ENCODE measurements at regions of chr6 and their contacts with region 1.

Region 1: GRCh38 chr6:1311400-1312202 is at the start of gene FOXQ1:
- DNase-seq: peak; percentile 95
- ATAC-seq: peak; percentile 79
- H3K4me3 ChIP-seq: peak within 1 kb of the TSS; percentile 98 to 99 (median 98)
- H3K27ac ChIP-seq: peak within 1 kb of the TSS; percentile 97
- H3K4me1 ChIP-seq: peaks cover 46% of the 10 kb centered on the region
- H3K27me3 ChIP-seq: no peaks in the 10 kb centered on the region; a peak in 1 of 5 replicates
- CTCF ChIP-seq: peak; percentile 50
- EP300 ChIP-seq: peak; percentile 56; a peak in 3 of 4 replicates
- POLR2A ChIP-seq: peak in 1 of 2 experiments; percentile 99; a peak in 2 of 4 replicates
- RAD21 ChIP-seq: peak; percentile 84
- total RNA-seq, gene FOXQ1: 39.2 and 39.8 TPM in 2 replicates

Region 2: DNA sequence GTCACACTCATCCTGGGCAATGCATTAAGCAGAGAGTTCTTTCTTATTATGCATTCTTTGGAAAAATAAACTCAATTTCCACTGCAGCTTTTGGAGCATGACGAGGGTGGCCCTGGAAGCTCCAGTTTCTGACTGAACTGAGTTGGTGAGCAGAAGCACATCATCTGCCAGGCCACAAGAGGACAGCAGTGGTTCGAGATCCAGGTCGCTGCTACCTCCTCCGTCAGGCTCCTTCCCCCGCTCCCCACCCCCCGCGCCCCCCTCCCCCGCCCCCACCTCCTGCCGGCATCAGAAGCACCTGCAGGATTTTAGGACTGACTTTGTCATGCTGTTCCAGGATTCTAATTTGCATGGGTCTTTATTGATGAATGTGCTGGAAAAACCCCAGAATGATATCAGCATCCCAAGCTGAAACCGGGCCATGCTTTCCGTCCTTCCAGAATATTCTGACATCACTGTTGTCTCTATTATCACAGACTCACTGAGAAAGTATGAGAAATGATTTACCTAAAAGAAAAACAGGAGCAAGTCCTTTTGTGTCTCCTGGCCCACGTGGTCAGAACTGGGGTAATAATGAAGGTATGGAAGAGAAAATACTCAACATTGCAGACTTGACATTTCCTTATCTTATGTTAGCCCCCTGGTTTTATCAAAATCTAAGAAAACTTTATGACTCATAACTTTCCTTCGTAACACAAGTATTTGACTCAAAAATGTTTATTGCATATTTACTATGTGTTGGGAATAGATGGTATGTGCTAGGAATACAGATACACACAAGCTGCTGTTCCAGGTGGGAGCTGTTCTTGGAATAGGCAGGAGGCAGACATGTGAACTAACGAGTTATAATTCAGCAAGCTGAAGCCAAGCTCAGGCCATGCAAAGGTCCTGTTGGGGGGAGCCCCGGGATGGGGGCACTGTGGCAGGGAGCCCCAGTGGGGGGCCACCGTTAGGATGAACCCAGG is 398.4 kb before region 1 on chr6:
- CTCF ChIA-PET with region 1: no interaction called
- POLR2A ChIA-PET with region 1: interaction called, 32 read pairs
- in situ Hi-C with region 1: no loop called
- intact Hi-C with region 1: no loop called
- DNase-seq: peak; percentile 56
- ATAC-seq: peak; percentile 91
- H3K4me3 ChIP-seq: no peak overlapping the region
- H3K27ac ChIP-seq: no peak overlapping the region
- H3K4me1 ChIP-seq: peaks cover 16% of the 10 kb centered on the region
- H3K27me3 ChIP-seq: peaks cover 2 to 15% of the 10 kb centered on the region in 2 experiments; a peak in 1 of 5 replicates
- CTCF ChIP-seq: peak; percentile 84
- EP300 ChIP-seq: no peak
- POLR2A ChIP-seq: no peak
- RAD21 ChIP-seq: peak; percentile 85

Region 3: GRCh38 chr6:1117530-1118286 is 193.9 kb before region 1 on chr6:
- CTCF ChIA-PET with region 1: no interaction called
- POLR2A ChIA-PET with region 1: interaction called, 11 read pairs
- in situ Hi-C with region 1: no loop called
- intact Hi-C with region 1: no loop called
- DNase-seq: peak; percentile 70
- ATAC-seq: peak; percentile 69
- H3K4me3 ChIP-seq: peak overlapping the region in 1 of 3 experiments; percentile 17; a peak in 1 of 6 replicates
- H3K27ac ChIP-seq: peak overlapping the region; percentile 4
- H3K4me1 ChIP-seq: peaks cover 40% of the 10 kb centered on the region
- H3K27me3 ChIP-seq: no peaks in the 10 kb centered on the region
- CTCF ChIP-seq: no peak
- EP300 ChIP-seq: 0 out of 4 replicates have a peak, but pooled peaks of 1 of the 2 experiments have one; percentile 34
- POLR2A ChIP-seq: no peak
- RAD21 ChIP-seq: no peak

Region 4: DNA sequence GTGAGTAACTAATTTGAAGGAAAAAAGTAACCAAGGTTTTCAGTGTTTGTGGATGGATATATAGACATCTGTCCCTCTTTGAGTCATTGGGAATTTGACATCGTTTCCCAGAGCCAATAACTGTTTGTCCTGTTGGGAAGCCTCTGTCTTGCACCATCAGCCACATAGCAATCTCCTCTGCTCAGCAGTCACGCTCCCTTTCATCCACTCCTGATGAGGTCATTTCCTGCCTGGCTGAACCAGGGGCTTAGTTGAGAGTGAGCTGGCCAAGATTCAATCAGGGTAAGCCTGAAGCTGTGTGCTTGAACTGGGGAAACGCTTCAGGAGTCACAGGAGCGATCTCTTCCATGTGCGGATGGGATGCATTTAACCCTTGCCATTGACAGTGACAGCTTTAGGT is 121.2 kb before region 1 on chr6:
- CTCF ChIA-PET with region 1: no interaction called
- POLR2A ChIA-PET with region 1: interaction called, 19 read pairs
- in situ Hi-C with region 1: no loop called
- intact Hi-C with region 1: no loop called
- DNase-seq: peak; percentile 79
- ATAC-seq: peak; percentile 28; the same call in 2 of the 3 replicates
- H3K4me3 ChIP-seq: no peak overlapping the region
- H3K27ac ChIP-seq: no peak overlapping the region
- H3K4me1 ChIP-seq: peaks cover 27% of the 10 kb centered on the region
- H3K27me3 ChIP-seq: no peaks in the 10 kb centered on the region
- CTCF ChIP-seq: no peak
- EP300 ChIP-seq: no peak
- POLR2A ChIP-seq: no peak
- RAD21 ChIP-seq: no peak

Region 5: DNA sequence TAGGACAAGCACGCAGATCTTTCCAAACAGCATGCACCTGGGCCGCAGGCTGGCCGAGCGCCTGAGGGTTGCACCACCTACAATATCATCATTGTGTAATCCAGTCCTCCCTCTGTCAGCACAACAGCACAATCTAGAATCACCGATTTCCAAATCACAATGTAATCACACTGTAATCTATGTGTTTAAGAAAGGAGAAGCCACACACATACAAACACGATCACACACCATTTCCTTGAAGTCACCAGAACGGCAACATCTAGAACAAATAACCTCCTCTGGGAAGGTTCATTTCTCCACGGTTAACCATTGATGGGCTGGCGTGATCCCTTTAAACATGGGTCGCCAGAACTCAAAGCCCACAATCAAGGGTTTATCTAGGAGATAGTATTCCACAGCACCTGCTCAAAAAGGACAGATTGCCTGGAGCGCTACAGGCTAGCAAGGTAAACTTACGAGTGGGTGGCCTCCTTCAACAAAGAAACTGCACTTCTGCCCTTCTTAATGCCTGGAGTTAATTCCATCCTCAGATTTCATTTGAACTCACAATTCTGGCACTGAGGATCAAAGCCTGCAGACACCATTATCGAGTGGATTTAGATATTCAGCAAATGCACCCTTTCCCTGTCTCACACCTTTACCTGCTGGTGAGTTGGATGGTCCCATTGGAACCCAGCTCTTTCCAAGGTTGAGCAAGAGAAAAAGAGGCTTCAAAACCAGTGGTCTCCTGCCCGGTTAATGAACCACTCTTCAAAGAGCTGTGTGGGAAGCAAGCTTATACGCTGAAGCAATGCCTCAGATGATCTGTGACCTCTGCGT is 83.5 kb before region 1 on chr6:
- CTCF ChIA-PET with region 1: interaction called, 3 read pairs
- POLR2A ChIA-PET with region 1: interaction called, 354 read pairs
- in situ Hi-C with region 1: no loop called
- intact Hi-C with region 1: loop called (anchors 1 kb)
- DNase-seq: peak; percentile 99
- ATAC-seq: peak; percentile 89
- H3K4me3 ChIP-seq: peak overlapping the region; percentile 54 to 68 (median 59)
- H3K27ac ChIP-seq: peak overlapping the region; percentile 96
- H3K4me1 ChIP-seq: peaks cover 97% of the 10 kb centered on the region
- H3K27me3 ChIP-seq: no peaks in the 10 kb centered on the region; a peak in 1 of 5 replicates
- CTCF ChIP-seq: 0 out of 2 replicates have a peak, but pooled peaks have one; percentile 3
- EP300 ChIP-seq: peak; percentile 85 to 98
- POLR2A ChIP-seq: peak; percentile 51 to 66; a peak in 3 of 4 replicates
- RAD21 ChIP-seq: peak; percentile 48

Region 6: GRCh38 chr6:1290086-1290485 is 21.5 kb before region 1 on chr6:
- CTCF ChIA-PET with region 1: no interaction called
- POLR2A ChIA-PET with region 1: interaction called, 66 read pairs
- in situ Hi-C with region 1: no loop called
- intact Hi-C with region 1: no loop called
- DNase-seq: no peak
- ATAC-seq: no peak
- H3K4me3 ChIP-seq: no peak overlapping the region
- H3K27ac ChIP-seq: no peak overlapping the region
- H3K4me1 ChIP-seq: peaks cover 24% of the 10 kb centered on the region
- H3K27me3 ChIP-seq: no peaks in the 10 kb centered on the region
- CTCF ChIP-seq: no peak
- EP300 ChIP-seq: no peak
- POLR2A ChIP-seq: no peak
- RAD21 ChIP-seq: no peak

Region 7: DNA sequence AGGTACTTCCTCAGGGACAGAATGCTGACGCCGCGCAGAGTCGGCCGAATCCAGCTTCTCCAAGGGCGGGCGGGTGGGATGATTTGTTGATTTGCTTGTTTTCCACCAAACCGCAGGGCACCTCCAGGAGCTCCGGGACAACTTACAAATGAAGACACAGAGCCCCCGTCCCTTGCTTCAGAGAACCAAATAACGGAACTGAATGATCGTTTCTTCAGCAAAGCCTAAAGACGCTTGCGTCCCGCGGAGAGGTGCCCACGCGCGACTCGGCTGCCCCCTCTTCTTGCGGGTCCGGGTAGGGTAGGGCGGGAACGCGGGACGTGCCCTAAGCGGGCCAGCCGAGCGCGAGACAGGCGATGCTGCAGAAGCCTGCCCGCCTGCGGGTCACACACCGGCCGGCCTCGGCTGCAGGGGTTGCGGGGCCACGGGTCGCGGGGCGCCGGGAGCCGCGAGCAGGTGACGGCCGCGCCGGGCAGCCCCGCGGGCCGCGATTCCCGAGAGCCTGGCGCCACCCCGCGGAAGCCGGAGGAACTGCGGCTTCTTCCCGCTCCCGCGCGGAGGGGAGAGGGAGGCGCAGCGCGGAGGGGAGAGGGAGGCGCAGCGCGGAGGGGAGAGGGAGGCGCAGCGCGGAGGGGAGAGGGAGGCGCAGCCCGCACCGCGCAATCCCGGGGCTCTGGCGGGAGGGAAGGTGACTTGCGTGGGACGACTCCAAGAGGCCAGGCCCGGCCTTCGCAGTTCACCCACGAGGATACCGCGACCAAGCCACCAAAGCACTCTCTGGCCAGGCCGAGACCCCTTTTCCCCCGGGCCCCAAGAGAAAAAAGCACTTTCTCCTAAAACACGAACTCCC is 70.1 kb after region 1 on chr6:
- CTCF ChIA-PET with region 1: no interaction called
- POLR2A ChIA-PET with region 1: no interaction called
- in situ Hi-C with region 1: no loop called
- intact Hi-C with region 1: no loop called
- DNase-seq: no peak
- ATAC-seq: peak; percentile 86
- H3K4me3 ChIP-seq: peak overlapping the region; percentile 45 to 65 (median 46); a peak in 5 of 6 replicates
- H3K27ac ChIP-seq: no peak overlapping the region
- H3K4me1 ChIP-seq: peaks cover 21% of the 10 kb centered on the region; the same call in 1 of the 2 replicates
- H3K27me3 ChIP-seq: peaks cover 42 to 96% of the 10 kb centered on the region in 2 experiments
- CTCF ChIP-seq: peak; percentile 90
- EP300 ChIP-seq: no peak
- POLR2A ChIP-seq: no peak
- RAD21 ChIP-seq: peak; percentile 100

Region 8: DNA sequence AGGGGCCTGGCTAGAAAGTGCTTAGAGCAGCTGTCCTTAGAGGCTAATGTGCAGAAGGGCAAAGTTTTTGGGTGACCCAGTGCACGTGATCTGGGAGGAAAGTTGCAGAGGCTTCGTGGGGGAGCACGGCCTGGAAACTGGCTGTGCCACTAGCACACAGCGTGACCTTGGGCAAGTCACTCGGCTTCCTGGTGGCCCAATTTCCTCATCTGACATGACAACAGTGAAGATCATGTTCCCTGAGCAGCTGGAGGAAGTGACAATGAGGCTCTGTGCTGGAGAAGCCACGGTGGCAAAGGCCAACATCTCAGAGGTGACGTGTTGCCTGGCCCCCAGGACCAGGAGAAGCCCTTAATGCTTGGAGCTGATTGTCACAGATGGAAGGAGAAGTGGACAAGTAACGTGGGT is 397.6 kb after region 1 on chr6:
- CTCF ChIA-PET with region 1: no interaction called
- POLR2A ChIA-PET with region 1: no interaction called
- in situ Hi-C with region 1: no loop called
- intact Hi-C with region 1: no loop called
- DNase-seq: peak; percentile 30
- ATAC-seq: peak; percentile 18
- H3K4me3 ChIP-seq: no peak overlapping the region
- H3K27ac ChIP-seq: no peak overlapping the region
- H3K4me1 ChIP-seq: peaks cover 2% of the 10 kb centered on the region; the same call in 1 of the 2 replicates
- H3K27me3 ChIP-seq: no peaks in the 10 kb centered on the region
- CTCF ChIP-seq: no peak
- EP300 ChIP-seq: no peak
- POLR2A ChIP-seq: no peak
- RAD21 ChIP-seq: no peak